ENCODE measurements at regions of chr1 and their contacts with region 1.

Region 1: GRCh38 chr1:23772049-23772853 is 6.0 kb upstream of the PITHD1 start:
- DNase-seq: peak; percentile 59
- H3K4me3 ChIP-seq: no peak overlapping the region
- H3K27ac ChIP-seq: no peak overlapping the region
- H3K27me3 ChIP-seq: no peaks in the 10 kb centered on the region
- CTCF ChIP-seq: peak; percentile 97

Region 2: GRCh38 chr1:23745515-23745914 is 26.7 kb before region 1 on chr1:
- CTCF ChIA-PET with region 1: interaction called, 17 read pairs
- POLR2A ChIA-PET with region 1: interaction called, 3 read pairs
- DNase-seq: no peak
- H3K4me3 ChIP-seq: no peak overlapping the region
- H3K27ac ChIP-seq: no peak overlapping the region
- H3K27me3 ChIP-seq: no peaks in the 10 kb centered on the region
- CTCF ChIP-seq: peak; percentile 58

Region 3: DNA sequence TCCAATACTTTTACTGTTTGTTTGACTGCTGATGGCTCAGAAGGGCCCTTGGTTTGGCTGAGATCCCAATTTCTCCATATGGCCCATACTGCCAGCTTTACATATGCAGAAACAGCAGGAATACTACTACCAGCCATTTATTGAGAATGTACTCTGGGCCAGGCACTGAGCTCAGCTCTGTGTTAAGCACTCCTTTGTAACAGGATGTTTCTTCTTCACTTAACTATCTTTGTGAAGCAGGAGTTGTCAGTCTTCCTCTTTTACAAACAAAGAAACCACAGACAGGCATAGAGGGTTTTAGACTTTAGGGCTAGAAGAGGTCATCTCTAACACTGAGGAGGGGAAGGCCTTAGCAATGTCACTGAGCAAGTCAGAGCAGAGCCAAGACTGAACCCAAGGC is 44.7 kb after region 1 on chr1:
- CTCF ChIA-PET with region 1: no interaction called
- POLR2A ChIA-PET with region 1: no interaction called
- DNase-seq: no peak
- H3K4me3 ChIP-seq: no peak overlapping the region
- H3K27ac ChIP-seq: no peak overlapping the region
- H3K27me3 ChIP-seq: no peaks in the 10 kb centered on the region
- CTCF ChIP-seq: no peak

Region 4: GRCh38 chr1:23854568-23854967 is 82.3 kb after region 1 on chr1:
- CTCF ChIA-PET with region 1: interaction called, 16 read pairs
- POLR2A ChIA-PET with region 1: no interaction called
- DNase-seq: no peak
- H3K4me3 ChIP-seq: no peak overlapping the region
- H3K27ac ChIP-seq: no peak overlapping the region
- H3K27me3 ChIP-seq: peaks cover 4% of the 10 kb centered on the region
- CTCF ChIP-seq: peak; percentile 29

Region 5: GRCh38 chr1:23916209-23917131 is 144.2 kb after region 1 on chr1:
- CTCF ChIA-PET with region 1: interaction called, 43 read pairs
- POLR2A ChIA-PET with region 1: interaction called, 3 read pairs
- DNase-seq: peak; percentile 23
- H3K4me3 ChIP-seq: no peak overlapping the region
- H3K27ac ChIP-seq: no peak overlapping the region
- H3K27me3 ChIP-seq: no peaks in the 10 kb centered on the region
- CTCF ChIP-seq: peak; percentile 77

Region 6: DNA sequence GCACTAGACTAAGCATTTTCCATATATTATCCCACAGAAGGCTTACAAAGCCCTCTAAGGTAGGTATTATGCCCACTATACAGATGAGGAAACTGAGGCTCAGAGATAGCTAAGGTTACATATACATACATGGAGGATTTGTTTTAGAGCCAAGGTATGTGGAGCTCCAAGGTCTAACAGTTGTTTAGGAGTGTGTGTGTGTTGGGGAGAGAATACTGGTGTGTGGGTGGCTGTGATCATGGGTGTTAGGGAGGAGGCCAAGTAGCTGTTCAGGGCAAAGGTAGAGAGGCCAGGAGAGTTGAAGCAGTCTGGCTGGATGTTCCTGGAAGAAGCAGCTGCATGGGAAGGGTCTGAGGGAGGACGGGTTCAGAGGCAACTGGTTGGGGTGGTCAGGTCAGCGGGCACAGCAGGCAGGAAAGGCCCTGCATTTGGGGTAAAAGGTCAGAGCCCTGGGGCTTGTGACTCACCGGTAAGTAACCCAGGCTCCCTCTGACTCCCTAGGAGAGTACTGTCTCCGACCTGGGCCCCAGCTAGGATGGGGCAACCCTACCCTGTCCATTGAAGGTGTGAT is 1766.0 kb after region 1 on chr1:
- CTCF ChIA-PET with region 1: no interaction called
- POLR2A ChIA-PET with region 1: no interaction called
- DNase-seq: no peak
- H3K4me3 ChIP-seq: no peak overlapping the region
- H3K27ac ChIP-seq: no peak overlapping the region
- H3K27me3 ChIP-seq: peaks cover 18% of the 10 kb centered on the region
- CTCF ChIP-seq: no peak